ENCODE measurements at regions of chr16 and their contacts with region 1.

Region 1: DNA sequence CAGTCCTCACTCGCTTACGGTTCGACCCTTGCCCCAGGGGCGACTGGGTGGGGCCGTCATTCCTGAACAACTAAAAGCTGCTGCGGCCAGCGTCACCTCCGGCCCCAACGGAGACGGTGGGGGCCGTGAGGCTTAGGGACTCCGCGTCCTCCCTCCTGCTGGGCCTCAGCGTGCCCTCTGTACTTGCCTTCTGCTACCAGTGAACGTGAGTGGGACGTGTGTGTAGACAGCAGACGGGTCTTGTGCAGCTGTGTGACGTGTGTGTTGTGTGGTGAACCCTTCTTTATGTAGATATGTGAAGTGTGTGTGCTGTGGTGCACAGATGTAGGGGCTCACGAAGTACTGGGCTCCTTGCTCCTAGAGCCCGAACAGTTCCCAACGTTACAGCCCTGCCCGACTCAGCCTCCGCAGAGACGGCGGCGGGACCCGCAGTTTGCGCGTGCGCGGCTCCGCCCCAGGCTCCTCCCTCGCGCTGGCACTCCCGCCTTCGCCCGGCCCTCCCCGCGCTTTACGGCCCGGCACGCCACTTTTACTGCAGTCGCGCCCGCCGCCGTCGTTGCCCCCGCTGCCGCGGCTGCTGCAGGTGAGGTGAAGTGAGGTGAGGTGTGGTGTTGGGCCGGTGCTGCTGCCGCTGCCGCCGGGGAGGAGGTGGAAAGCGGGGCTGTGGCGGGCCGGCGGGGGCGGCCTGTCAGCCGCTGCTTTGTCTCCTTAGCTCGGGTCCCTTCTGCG is at the start of gene PHAF1:
- DNase-seq: peak; percentile 93
- H3K4me3 Mint-ChIP-seq: peak within 1 kb of the TSS; percentile 96
- H3K27ac Mint-ChIP-seq: peak within 1 kb of the TSS; percentile 87
- H3K4me1 Mint-ChIP-seq: peaks cover 45% of the 10 kb centered on the region
- H3K27me3 Mint-ChIP-seq: no peaks in the 10 kb centered on the region
- total RNA-seq, gene PHAF1: 20.5 and 20.6 TPM in 2 replicates

Region 2: GRCh38 chr16:67150833-67151396 is 41.3 kb after region 1 on chr16 and contains the start of gene B3GNT9:
- intact Hi-C with region 1: loop called (anchors 2 kb)
- DNase-seq: no peak
- H3K4me3 Mint-ChIP-seq: peak within 1 kb of the TSS; percentile 79
- H3K27ac Mint-ChIP-seq: peak within 1 kb of the TSS; percentile 58
- H3K4me1 Mint-ChIP-seq: peaks cover 33% of the 10 kb centered on the region
- H3K27me3 Mint-ChIP-seq: no peaks in the 10 kb centered on the region
- total RNA-seq, gene B3GNT9: 6.2 TPM in 2 replicates

Region 3: DNA sequence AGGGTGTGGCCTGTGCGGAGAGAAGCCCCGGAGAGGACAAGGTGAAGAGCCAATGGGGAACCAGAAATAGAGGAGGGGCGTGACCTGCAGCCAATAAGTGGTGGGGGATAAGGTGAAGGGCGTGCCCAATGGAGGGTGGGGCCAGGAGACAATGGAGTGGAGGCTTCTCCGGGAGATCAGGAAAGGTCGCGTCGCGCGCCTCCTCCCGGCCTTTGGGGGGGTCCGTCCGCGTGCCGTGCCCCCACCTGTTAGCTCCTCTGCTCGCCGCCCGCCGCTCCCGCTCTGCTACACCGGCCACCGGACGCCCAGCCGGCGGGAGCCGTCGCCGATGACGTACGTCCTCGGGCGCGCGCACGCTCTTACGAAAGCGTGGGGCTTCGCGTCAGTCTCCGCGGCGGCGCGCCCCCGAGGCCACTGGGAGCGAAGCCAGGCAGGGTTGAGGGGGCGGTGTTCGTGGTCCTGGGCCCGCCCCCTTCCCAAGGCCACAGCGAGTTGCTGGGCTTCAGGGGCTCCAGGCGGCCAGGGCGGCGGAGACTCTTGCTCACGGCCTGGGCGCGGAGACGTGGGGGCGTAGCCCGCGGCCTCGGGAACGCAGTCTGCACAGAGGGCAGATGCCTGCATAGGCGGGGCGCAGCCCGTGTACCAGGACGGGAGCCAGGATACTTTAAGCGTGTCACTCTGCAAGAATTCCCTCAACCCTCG is 74.2 kb after region 1 on chr16 and contains the start of gene MATCAP1:
- intact Hi-C with region 1: loop called (anchors 2 kb)
- DNase-seq: peak; percentile 94
- H3K4me3 Mint-ChIP-seq: peak within 1 kb of the TSS; percentile 62
- H3K27ac Mint-ChIP-seq: no peak within 1 kb of the TSS
- H3K4me1 Mint-ChIP-seq: peaks cover 20% of the 10 kb centered on the region
- H3K27me3 Mint-ChIP-seq: peaks cover 8% of the 10 kb centered on the region
- total RNA-seq, gene MATCAP1: 45.5 and 48.2 TPM in 2 replicates